Ascending aorta (tissue), 2 donors: ENCODE measurements at regions of chr4 and their contacts with region 1.

Region 1: GRCh38 chr4:110516106-110516922 is 40.4 kb downstream of the ENPEP start:
- DNase-seq: peak; percentile 9 to 75
- H3K4me3 ChIP-seq: peak overlapping the region; percentile 39 to 62
- H3K27ac ChIP-seq: no peak overlapping the region
- H3K4me1 ChIP-seq: no peaks in the 10 kb centered on the region
- H3K27me3 ChIP-seq: no peaks in the 10 kb centered on the region
- CTCF ChIP-seq: peak; percentile 32 to 64 (median 63)

Region 2: DNA sequence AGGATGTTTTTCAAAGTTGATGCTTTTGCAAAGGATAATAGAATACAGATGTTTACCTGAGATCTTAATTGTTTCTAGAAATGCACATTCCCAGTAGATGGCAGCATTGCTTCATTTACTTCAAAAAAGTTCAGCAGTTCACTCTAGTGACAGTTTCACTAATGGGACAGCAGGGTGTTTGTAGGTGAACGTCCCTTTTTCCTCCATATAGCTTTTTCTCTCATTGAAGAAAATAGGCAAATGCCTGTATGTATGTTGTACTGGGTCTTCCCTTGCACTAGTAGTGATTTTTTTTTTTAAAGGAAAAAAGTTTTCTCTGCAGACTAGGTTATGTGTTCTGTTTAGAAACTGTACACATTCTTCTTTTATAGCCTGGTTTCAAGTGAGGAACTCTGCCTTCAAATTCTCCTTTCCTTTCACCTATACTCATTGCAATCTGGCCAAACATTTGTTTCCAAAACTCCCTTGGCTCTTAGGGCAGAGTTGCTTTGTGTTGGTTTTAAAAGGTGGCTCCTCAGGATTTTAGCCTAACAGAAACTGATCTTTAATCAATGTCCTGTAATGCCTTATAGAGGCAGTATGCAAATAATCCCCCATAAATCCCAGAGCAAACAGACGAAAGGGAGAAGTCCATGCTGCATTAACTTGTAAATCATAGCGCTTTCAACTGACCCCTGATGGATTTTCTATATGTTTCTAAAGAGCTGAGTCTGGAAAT is 517.3 kb before region 1 on chr4:
- intact Hi-C with region 1: loop called (anchors 2 kb)
- DNase-seq: no peak
- H3K4me3 ChIP-seq: no peak overlapping the region
- H3K27ac ChIP-seq: no peak overlapping the region
- H3K4me1 ChIP-seq: no peaks in the 10 kb centered on the region
- H3K27me3 ChIP-seq: no peaks in the 10 kb centered on the region
- CTCF ChIP-seq: peak; percentile 39 to 68 (median 48)

Region 3: DNA sequence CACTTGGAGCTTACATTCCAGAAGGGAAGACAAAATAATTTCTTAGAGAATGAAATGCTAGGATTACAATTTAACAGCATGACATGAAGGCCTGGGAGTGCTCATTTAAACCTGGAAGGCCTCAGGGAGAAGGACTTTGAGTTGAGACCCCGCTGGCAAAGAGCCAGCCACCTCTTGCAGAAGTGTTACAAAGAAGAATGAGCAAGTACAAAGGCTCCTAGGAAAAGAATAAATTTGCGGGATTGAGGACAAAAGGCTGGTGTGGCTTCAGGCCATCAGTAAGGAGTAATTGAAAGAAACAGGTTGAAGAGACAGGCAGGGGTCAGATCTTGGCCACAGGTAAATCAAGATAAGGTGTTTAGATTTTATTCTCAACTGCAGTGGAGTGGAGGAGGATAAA is 314.8 kb before region 1 on chr4:
- intact Hi-C with region 1: loop called (anchors 10 kb)
- DNase-seq: no peak
- H3K4me3 ChIP-seq: no peak overlapping the region
- H3K27ac ChIP-seq: no peak overlapping the region
- H3K4me1 ChIP-seq: no peaks in the 10 kb centered on the region
- H3K27me3 ChIP-seq: no peaks in the 10 kb centered on the region
- CTCF ChIP-seq: no peak

Region 4: GRCh38 chr4:110310795-110311194 is 205.5 kb before region 1 on chr4:
- intact Hi-C with region 1: loop called (anchors 10 kb)
- DNase-seq: no peak
- H3K4me3 ChIP-seq: no peak overlapping the region
- H3K27ac ChIP-seq: no peak overlapping the region
- H3K4me1 ChIP-seq: no peaks in the 10 kb centered on the region
- H3K27me3 ChIP-seq: no peaks in the 10 kb centered on the region
- CTCF ChIP-seq: no peak

Region 5: GRCh38 chr4:110982486-110982885 is 466.2 kb after region 1 on chr4:
- intact Hi-C with region 1: no loop called
- DNase-seq: no peak
- H3K4me3 ChIP-seq: no peak overlapping the region
- H3K27ac ChIP-seq: no peak overlapping the region
- H3K4me1 ChIP-seq: no peaks in the 10 kb centered on the region
- H3K27me3 ChIP-seq: no peaks in the 10 kb centered on the region
- CTCF ChIP-seq: no peak

Region 6: GRCh38 chr4:111400741-111401140 is 884.4 kb after region 1 on chr4:
- intact Hi-C with region 1: no loop called
- DNase-seq: no peak
- H3K4me3 ChIP-seq: no peak overlapping the region
- H3K27ac ChIP-seq: no peak overlapping the region
- H3K4me1 ChIP-seq: no peaks in the 10 kb centered on the region
- H3K27me3 ChIP-seq: no peaks in the 10 kb centered on the region
- CTCF ChIP-seq: no peak